Activated CD8-positive, alpha-beta T cell treated with anti-CD3 and anti-CD28 coated beads for 36 hours (primary cell): ENCODE measurements at regions of chr9 and their contacts with region 1.

Region 1: GRCh38 chr9:132249123-132249522 is 87.3 kb downstream of the NTNG2 start:
- DNase-seq: no peak
- ATAC-seq: no peak
- H3K4me3 Mint-ChIP-seq: no peak overlapping the region
- H3K27ac Mint-ChIP-seq: no peak overlapping the region
- H3K4me1 Mint-ChIP-seq: peaks cover 3% of the 10 kb centered on the region
- H3K27me3 Mint-ChIP-seq: peaks cover 8% of the 10 kb centered on the region
- CTCF ChIP-seq: no peak

Region 2: GRCh38 chr9:131762356-131762932 is 486.7 kb before region 1 on chr9:
- CTCF ChIA-PET with region 1: interaction called, 33 read pairs
- POLR2A ChIA-PET with region 1: no interaction called
- intact Hi-C with region 1: loop called (anchors 5 kb)
- DNase-seq: peak; percentile 79
- ATAC-seq: peak; percentile 90
- H3K4me3 Mint-ChIP-seq: no peak overlapping the region
- H3K27ac Mint-ChIP-seq: no peak overlapping the region
- H3K4me1 Mint-ChIP-seq: peaks cover 11% of the 10 kb centered on the region
- H3K27me3 Mint-ChIP-seq: peaks cover 10% of the 10 kb centered on the region
- CTCF ChIP-seq: peak; percentile 97

Region 3: DNA sequence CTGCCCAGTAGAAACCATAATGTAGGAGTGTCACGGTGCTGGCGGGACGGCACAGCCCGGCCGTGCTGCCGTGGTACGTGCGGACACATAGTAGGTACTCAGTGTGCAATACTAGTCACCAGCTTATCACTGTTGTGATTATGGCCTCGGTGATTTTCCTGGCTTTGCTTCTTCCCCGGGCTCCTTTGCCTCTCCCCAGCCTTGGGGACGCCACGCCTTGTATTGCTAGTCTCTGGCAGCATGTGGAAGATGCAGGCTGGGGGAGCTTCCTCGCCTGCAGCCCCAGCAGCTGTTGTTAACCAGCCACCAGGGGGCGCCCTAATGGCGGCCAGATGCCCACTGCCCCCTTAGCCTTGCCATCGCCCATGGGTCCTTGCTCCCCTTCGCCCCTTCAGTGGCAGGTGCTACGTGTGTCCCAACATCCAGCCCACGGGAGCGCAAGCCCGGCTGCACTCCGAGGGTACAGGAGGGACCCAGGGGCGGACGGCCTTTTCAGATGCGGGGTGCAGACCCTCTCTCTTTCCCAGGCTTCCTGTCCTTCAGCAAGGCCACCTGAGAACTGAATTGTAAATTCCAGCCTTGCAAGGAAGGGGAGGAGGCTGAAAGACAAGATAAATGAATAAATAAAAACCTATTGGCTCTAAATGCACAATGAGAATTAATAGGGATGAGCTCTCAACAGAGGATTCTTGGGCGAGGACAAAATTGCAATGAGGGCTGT is 79.3 kb before region 1 on chr9:
- CTCF ChIA-PET with region 1: interaction called, 47 read pairs
- POLR2A ChIA-PET with region 1: no interaction called
- intact Hi-C with region 1: no loop called
- DNase-seq: peak; percentile 72
- ATAC-seq: peak; percentile 77
- H3K4me3 Mint-ChIP-seq: no peak overlapping the region
- H3K27ac Mint-ChIP-seq: no peak overlapping the region
- H3K4me1 Mint-ChIP-seq: no peaks in the 10 kb centered on the region
- H3K27me3 Mint-ChIP-seq: peaks cover 21% of the 10 kb centered on the region
- CTCF ChIP-seq: peak; percentile 96

Region 4: GRCh38 chr9:132260846-132261245 is 11.7 kb after region 1 on chr9:
- CTCF ChIA-PET with region 1: interaction called, 30 read pairs
- POLR2A ChIA-PET with region 1: no interaction called
- intact Hi-C with region 1: no loop called
- DNase-seq: no peak
- ATAC-seq: no peak
- H3K4me3 Mint-ChIP-seq: no peak overlapping the region
- H3K27ac Mint-ChIP-seq: no peak overlapping the region
- H3K4me1 Mint-ChIP-seq: peaks cover 11% of the 10 kb centered on the region
- H3K27me3 Mint-ChIP-seq: no peaks in the 10 kb centered on the region
- CTCF ChIP-seq: no peak

Region 5: GRCh38 chr9:132406554-132407122 is 157.5 kb after region 1 on chr9 and contains the start of gene TTF1:
- CTCF ChIA-PET with region 1: no interaction called
- POLR2A ChIA-PET with region 1: no interaction called
- intact Hi-C with region 1: no loop called
- DNase-seq: peak; percentile 96
- ATAC-seq: peak; percentile 78
- H3K4me3 Mint-ChIP-seq: peak within 1 kb of the TSS; percentile 88
- H3K27ac Mint-ChIP-seq: peak within 1 kb of the TSS; percentile 89
- H3K4me1 Mint-ChIP-seq: peaks cover 50% of the 10 kb centered on the region
- H3K27me3 Mint-ChIP-seq: peaks cover 12% of the 10 kb centered on the region
- CTCF ChIP-seq: no peak
- total RNA-seq, gene TTF1: 38.2 to 38.3 TPM